ENCODE measurements at regions of chr9 and their contacts with region 1.

Region 1: GRCh38 chr9:123102375-123103110 is 69.1 kb downstream of the GPR21 start:
- DNase-seq: no peak
- H3K4me3 ChIP-seq: peak overlapping the region in 1 of 4 experiments; percentile 5; a peak in 1 of 8 replicates
- H3K27ac ChIP-seq: peak overlapping the region; percentile 87; the same call in 1 of the 2 replicates
- H3K4me1 ChIP-seq: peaks cover 3 to 16% (median 9%) of the 10 kb centered on the region in 4 experiments
- H3K27me3 ChIP-seq: no peaks in the 10 kb centered on the region
- CTCF ChIP-seq: no peak
- EP300 ChIP-seq: no peak; a peak in 1 of 3 replicates
- POLR2A ChIP-seq: peak in 1 of 2 experiments; percentile 48; a peak in 2 of 3 replicates
- RAD21 ChIP-seq: no peak

Region 2: DNA sequence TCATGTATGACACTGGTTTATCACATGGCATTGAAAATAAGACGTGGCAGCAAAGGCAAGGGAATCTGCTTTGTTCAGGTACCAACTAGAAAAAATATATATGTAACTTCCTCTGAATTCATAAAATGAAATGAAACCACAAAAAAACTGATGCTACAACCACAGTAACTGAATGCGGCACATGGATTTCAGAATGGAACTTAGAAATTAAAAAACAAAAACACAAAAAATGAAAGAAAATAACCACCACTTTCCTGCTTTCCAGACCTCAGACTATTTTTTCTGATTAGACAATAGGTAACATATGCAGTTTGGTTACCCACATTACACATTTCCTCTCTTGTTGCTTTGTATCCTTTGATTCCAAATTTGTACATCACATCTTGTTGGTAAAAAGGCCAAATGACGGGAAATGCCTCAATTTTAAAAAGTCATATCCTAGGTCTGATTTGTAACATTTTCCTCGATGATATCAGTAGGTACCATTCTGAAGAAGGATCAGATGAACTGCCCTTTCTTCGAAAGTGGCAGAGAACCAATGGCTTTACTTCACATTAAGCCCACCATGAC is 256.1 kb before region 1 on chr9:
- CTCF ChIA-PET with region 1: no interaction called
- POLR2A ChIA-PET with region 1: no interaction called
- DNase-seq: no peak
- H3K4me3 ChIP-seq: no peak overlapping the region
- H3K27ac ChIP-seq: no peak overlapping the region
- H3K4me1 ChIP-seq: no peaks in the 10 kb centered on the region
- H3K27me3 ChIP-seq: no peaks in the 10 kb centered on the region
- CTCF ChIP-seq: no peak
- EP300 ChIP-seq: no peak
- POLR2A ChIP-seq: no peak
- RAD21 ChIP-seq: no peak

Region 3: DNA sequence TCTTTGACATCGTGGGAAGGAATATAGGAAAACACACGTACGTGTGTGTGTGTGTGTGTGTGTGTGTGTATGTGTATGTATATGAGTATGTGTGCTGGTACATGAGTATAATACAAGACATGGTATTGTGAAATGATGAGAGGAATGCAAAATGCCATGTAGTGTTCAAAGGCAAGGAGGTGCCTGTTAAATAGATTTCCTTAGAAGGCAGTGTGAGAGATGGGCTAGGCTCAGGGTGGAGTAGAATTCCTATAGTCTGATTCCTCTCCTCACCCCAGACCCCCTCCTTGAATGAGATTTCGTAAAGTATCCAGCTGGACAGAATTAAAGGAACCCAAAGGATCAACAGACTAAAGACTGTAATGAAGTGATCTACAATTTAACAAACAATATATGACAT is 58.0 kb before region 1 on chr9:
- CTCF ChIA-PET with region 1: no interaction called
- POLR2A ChIA-PET with region 1: no interaction called
- DNase-seq: no peak
- H3K4me3 ChIP-seq: no peak overlapping the region
- H3K27ac ChIP-seq: no peak overlapping the region
- H3K4me1 ChIP-seq: no peaks in the 10 kb centered on the region
- H3K27me3 ChIP-seq: no peaks in the 10 kb centered on the region
- CTCF ChIP-seq: no peak
- EP300 ChIP-seq: no peak
- POLR2A ChIP-seq: no peak
- RAD21 ChIP-seq: no peak

Region 4: GRCh38 chr9:123081824-123082223 is 20.7 kb before region 1 on chr9:
- CTCF ChIA-PET with region 1: interaction called, 14 read pairs
- POLR2A ChIA-PET with region 1: interaction called, 4 read pairs
- DNase-seq: no peak
- H3K4me3 ChIP-seq: no peak overlapping the region
- H3K27ac ChIP-seq: no peak overlapping the region
- H3K4me1 ChIP-seq: peaks cover 0 to 5% (median 2%) of the 10 kb centered on the region in 4 experiments; a peak in 3 of 7 replicates
- H3K27me3 ChIP-seq: no peaks in the 10 kb centered on the region
- CTCF ChIP-seq: peak in 2 of 3 experiments; percentile 56 to 58; a peak in 2 of 4 replicates
- EP300 ChIP-seq: no peak
- POLR2A ChIP-seq: no peak
- RAD21 ChIP-seq: peak; percentile 84 to 86

Region 5: DNA sequence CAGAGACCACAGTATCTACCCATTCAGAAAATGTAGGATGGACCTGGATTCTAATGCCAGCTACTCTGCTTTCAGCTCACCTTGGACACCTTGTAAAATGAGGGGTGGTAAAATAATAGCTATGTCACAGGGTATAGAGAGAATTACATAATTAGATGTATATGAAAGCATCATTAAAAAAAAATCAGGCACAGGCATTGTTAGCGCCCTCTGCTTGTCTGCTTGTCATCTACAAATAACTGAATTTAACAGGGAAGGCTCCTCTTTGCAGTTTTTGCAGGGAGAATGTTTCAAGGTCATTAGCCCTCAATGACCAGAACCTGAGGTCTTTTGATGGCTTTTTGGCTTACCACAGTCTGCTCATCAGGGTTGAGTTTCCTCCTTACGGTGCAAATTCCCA is 11.1 kb before region 1 on chr9:
- CTCF ChIA-PET with region 1: interaction called, 49 read pairs
- POLR2A ChIA-PET with region 1: interaction called, 3 read pairs
- DNase-seq: no peak
- H3K4me3 ChIP-seq: no peak overlapping the region
- H3K27ac ChIP-seq: no peak overlapping the region
- H3K4me1 ChIP-seq: no peaks in the 10 kb centered on the region
- H3K27me3 ChIP-seq: no peaks in the 10 kb centered on the region
- CTCF ChIP-seq: peak in 2 of 3 experiments; percentile 18 to 34; a peak in 2 of 4 replicates
- EP300 ChIP-seq: no peak
- POLR2A ChIP-seq: no peak
- RAD21 ChIP-seq: peak in 1 of 2 experiments; percentile 10; a peak in 2 of 4 replicates

Region 6: DNA sequence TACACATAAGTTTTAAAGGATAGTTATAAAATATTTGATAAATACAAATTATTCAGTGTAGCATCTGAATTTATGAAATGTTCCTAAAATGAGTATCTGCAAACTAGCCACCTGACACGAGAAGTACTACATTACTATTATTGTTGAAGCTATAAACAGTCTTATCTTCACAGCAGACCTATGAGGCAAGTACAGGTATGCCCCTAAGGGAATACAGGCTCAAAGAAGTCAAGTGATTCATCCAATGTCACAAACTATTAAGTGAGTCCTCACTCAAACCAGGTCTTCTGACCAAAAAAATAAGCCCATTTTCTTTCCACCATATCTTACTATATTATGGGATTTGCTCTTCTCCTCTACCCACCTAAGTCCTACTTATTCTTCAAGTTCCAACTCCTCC is 137.2 kb after region 1 on chr9:
- CTCF ChIA-PET with region 1: no interaction called
- POLR2A ChIA-PET with region 1: no interaction called
- DNase-seq: no peak
- H3K4me3 ChIP-seq: no peak overlapping the region
- H3K27ac ChIP-seq: no peak overlapping the region
- H3K4me1 ChIP-seq: peaks cover 0 to 5% (median 1%) of the 10 kb centered on the region in 4 experiments; a peak in 5 of 7 replicates
- H3K27me3 ChIP-seq: no peaks in the 10 kb centered on the region
- CTCF ChIP-seq: no peak
- EP300 ChIP-seq: no peak
- POLR2A ChIP-seq: no peak
- RAD21 ChIP-seq: no peak

Measured in H1 (cell line).